ENCODE measurements at regions of chr10 and their contacts with region 1.

Region 1: GRCh38 chr10:60237977-60238758 is 151.5 kb downstream of the ANK3 start:
- DNase-seq: peak; percentile 23
- ATAC-seq: peak; percentile 51
- H3K4me3 Mint-ChIP-seq: peak overlapping the region; percentile 67
- H3K27ac Mint-ChIP-seq: peak overlapping the region; percentile 93
- H3K4me1 Mint-ChIP-seq: peaks cover 61% of the 10 kb centered on the region
- H3K27me3 Mint-ChIP-seq: no peaks in the 10 kb centered on the region
- CTCF ChIP-seq: no peak

Region 2: DNA sequence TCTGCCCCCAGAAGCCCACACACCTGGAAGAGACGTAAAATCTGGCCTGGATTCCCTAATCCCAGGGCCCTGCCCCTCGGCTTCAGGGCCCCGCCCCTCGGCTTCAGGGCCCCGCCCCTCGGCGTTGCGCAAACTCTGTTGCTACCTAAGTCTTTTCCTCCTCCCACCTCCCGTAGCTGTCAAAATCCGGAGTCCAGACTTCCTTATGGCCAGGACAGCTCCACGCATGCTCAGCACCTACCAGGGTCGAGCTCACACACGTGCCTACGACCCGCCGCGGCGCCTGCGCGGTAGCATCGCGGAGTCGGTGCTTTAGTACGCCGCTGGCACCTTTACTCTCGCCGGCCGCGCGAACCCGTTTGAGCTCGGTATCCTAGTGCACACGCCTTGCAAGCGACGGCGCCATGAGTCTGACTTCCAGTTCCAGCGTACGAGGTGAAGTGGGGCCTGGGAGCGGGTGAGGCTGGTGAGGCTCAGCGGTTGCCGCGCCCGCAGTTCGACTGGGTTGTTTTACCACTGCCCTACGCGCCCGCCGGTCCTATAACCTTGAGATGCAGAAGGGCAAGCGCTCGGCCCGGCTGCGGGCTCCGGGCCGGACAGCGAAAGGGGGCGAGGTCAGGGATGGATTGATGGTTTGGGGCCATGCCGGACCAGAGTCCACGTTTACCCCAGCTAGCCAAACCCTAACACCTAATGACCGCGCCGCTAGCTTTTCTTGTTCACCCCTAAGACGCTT is 1969.1 kb before region 1 on chr10 and contains the start of gene CISD1:
- CTCF ChIA-PET with region 1: no interaction called
- POLR2A ChIA-PET with region 1: interaction called, 3 read pairs
- intact Hi-C with region 1: loop called (anchors 2 kb)
- DNase-seq: peak; percentile 95
- ATAC-seq: peak; percentile 68
- H3K4me3 Mint-ChIP-seq: peak within 1 kb of the TSS; percentile 97
- H3K27ac Mint-ChIP-seq: peak within 1 kb of the TSS; percentile 93
- H3K4me1 Mint-ChIP-seq: peaks cover 47% of the 10 kb centered on the region
- H3K27me3 Mint-ChIP-seq: no peaks in the 10 kb centered on the region
- CTCF ChIP-seq: no peak
- total RNA-seq, gene CISD1: 16.7 and 23.8 TPM in 2 replicates

Region 3: GRCh38 chr10:60208676-60209269 is 29.4 kb before region 1 on chr10:
- CTCF ChIA-PET with region 1: interaction called, 41 read pairs
- POLR2A ChIA-PET with region 1: interaction called, 7 read pairs
- intact Hi-C with region 1: loop called (anchors 1 kb)
- DNase-seq: no peak
- ATAC-seq: peak; percentile 40
- H3K4me3 Mint-ChIP-seq: no peak overlapping the region
- H3K27ac Mint-ChIP-seq: no peak overlapping the region
- H3K4me1 Mint-ChIP-seq: peaks cover 33% of the 10 kb centered on the region
- H3K27me3 Mint-ChIP-seq: no peaks in the 10 kb centered on the region
- CTCF ChIP-seq: no peak

Region 4: DNA sequence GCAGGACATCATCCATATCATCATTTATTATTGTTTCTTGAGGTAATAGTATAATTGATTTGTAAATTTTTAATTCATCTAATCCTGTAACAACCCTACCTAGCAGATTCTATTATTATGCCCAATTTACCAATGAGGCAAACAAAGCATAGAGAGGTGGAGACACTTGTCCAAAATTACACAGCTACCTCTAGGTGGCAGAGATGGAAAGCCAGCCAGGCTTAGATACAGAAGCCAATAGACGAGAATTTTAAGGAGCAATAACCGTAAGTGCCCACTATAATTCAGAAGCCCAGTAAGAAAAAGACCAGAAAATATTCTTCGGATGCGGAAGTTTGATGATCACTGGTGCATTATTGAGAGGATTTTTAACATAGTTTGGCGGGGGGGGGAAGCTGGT is 97.5 kb after region 1 on chr10:
- CTCF ChIA-PET with region 1: interaction called, 10 read pairs
- POLR2A ChIA-PET with region 1: no interaction called
- intact Hi-C with region 1: loop called (anchors 5 kb)
- DNase-seq: no peak
- ATAC-seq: no peak
- H3K4me3 Mint-ChIP-seq: no peak overlapping the region
- H3K27ac Mint-ChIP-seq: no peak overlapping the region
- H3K4me1 Mint-ChIP-seq: no peaks in the 10 kb centered on the region
- H3K27me3 Mint-ChIP-seq: no peaks in the 10 kb centered on the region
- CTCF ChIP-seq: no peak

Region 5: DNA sequence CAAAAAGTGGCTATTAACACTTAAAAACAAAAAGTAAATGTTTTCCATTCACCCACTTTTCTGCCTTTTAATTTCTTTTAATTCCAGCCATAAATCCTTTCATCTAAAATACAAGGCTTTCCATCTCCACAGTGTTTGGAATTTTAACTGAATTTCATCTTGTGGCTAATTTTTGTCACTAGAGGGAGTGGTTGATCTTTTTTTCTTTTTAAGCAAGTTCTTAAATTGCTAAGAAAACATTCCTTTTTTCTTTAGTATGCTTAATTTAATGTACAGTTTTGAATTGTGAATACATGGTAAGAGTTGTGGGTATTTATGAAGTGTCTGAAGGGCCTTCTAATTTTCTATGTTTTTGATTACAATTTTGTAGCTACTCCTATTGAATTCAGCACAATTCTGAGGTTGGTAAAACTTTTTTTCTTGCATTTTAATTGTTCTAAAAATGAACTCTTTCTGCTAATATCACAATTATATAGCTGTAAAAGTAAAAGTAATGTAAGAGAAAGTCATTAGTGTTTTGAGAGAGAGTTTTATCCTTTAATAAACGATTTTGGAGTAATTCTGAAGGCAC is 206.4 kb after region 1 on chr10:
- CTCF ChIA-PET with region 1: interaction called, 37 read pairs
- POLR2A ChIA-PET with region 1: no interaction called
- intact Hi-C with region 1: no loop called
- DNase-seq: no peak
- ATAC-seq: no peak
- H3K4me3 Mint-ChIP-seq: no peak overlapping the region
- H3K27ac Mint-ChIP-seq: no peak overlapping the region
- H3K4me1 Mint-ChIP-seq: peaks cover 8% of the 10 kb centered on the region
- H3K27me3 Mint-ChIP-seq: no peaks in the 10 kb centered on the region
- CTCF ChIP-seq: no peak

Region 6: GRCh38 chr10:60606343-60607080 is 368.3 kb after region 1 on chr10:
- CTCF ChIA-PET with region 1: no interaction called
- POLR2A ChIA-PET with region 1: no interaction called
- intact Hi-C with region 1: no loop called
- DNase-seq: no peak
- ATAC-seq: no peak
- H3K4me3 Mint-ChIP-seq: no peak overlapping the region
- H3K27ac Mint-ChIP-seq: no peak overlapping the region
- H3K4me1 Mint-ChIP-seq: no peaks in the 10 kb centered on the region
- H3K27me3 Mint-ChIP-seq: no peaks in the 10 kb centered on the region
- CTCF ChIP-seq: no peak

Region 7: GRCh38 chr10:60778214-60779029 is 540.3 kb after region 1 on chr10 and contains the start of gene CDK1:
- CTCF ChIA-PET with region 1: no interaction called
- POLR2A ChIA-PET with region 1: no interaction called
- intact Hi-C with region 1: loop called (anchors 1 kb)
- DNase-seq: peak; percentile 86
- ATAC-seq: peak; percentile 99
- H3K4me3 Mint-ChIP-seq: peak within 1 kb of the TSS; percentile 96
- H3K27ac Mint-ChIP-seq: peak within 1 kb of the TSS; percentile 84
- H3K4me1 Mint-ChIP-seq: peaks cover 17% of the 10 kb centered on the region
- H3K27me3 Mint-ChIP-seq: peaks cover 3% of the 10 kb centered on the region
- CTCF ChIP-seq: no peak
- total RNA-seq, gene CDK1: 1.5 and 1.9 TPM in 2 replicates

Measured in activated B cell treated with CpG ODN at 0.5 μM for 24 hours (primary cell).